A549 (cell line): ENCODE measurements at regions of chr14 and their contacts with region 1.

Region 1: GRCh38 chr14:73503648-73504047 is 12.9 kb downstream of the RIOX1 start:
- DNase-seq: no peak
- ATAC-seq: no peak
- H3K4me3 ChIP-seq: no peak overlapping the region
- H3K27ac ChIP-seq: no peak overlapping the region
- H3K4me1 ChIP-seq: no peaks in the 10 kb centered on the region
- CTCF ChIP-seq: no peak
- EP300 ChIP-seq: no peak
- POLR2A ChIP-seq: no peak
- RAD21 ChIP-seq: no peak

Region 2: DNA sequence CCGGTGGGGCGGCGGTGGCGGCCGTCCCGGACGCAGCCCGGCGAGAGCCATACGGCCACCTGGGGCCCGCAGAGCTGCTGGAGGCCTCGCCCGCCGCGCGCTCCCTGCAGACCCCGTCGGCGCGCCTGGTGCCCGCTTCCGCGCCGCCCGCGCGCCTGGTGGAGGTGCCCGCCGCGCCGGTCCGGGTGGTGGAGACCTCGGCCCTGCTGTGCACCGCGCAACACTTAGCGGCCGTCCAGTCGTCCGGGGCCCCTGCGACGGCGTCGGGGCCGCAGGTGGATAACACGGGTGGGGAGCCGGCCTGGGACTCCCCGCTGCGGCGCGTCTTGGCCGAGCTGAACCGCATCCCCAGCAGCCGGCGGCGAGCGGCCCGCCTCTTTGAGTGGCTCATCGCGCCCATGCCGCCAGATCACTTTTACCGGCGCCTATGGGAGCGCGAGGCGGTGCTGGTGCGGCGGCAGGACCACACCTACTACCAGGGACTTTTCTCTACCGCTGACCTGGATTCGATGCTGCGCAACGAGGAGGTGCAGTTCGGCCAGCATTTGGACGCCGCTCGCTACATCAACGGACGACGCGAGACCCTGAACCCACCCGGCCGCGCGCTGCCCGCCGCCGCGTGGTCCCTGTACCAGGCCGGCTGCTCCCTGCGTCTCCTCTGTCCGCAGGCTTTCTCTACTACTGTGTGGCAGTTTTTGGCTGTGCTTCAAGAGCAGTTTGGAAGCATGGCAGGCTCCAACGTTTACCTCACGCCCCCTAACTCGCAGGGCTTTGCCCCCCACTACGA is 12.2 kb before region 1 on chr14:
- CTCF ChIA-PET with region 1: interaction called, 26 read pairs
- POLR2A ChIA-PET with region 1: interaction called, 7 read pairs
- DNase-seq: peak; percentile 65 to 67
- ATAC-seq: peak; percentile 83 to 87
- H3K4me3 ChIP-seq: peak overlapping the region; percentile 81
- H3K27ac ChIP-seq: peak overlapping the region; percentile 88 to 99
- H3K4me1 ChIP-seq: peaks cover 18% of the 10 kb centered on the region; the same call in 2 of the 3 replicates
- CTCF ChIP-seq: no peak
- EP300 ChIP-seq: no peak
- POLR2A ChIP-seq: peak; percentile 54
- RAD21 ChIP-seq: no peak

Region 3: GRCh38 chr14:73521229-73521628 is 17.6 kb after region 1 on chr14:
- CTCF ChIA-PET with region 1: interaction called, 50 read pairs
- POLR2A ChIA-PET with region 1: no interaction called
- DNase-seq: no peak
- ATAC-seq: peak in 1 of 2 experiments; percentile 51; a peak in 3 of 6 replicates
- H3K4me3 ChIP-seq: no peak overlapping the region
- H3K27ac ChIP-seq: no peak overlapping the region
- H3K4me1 ChIP-seq: peaks cover 1% of the 10 kb centered on the region; the same call in 1 of the 3 replicates
- CTCF ChIP-seq: no peak
- EP300 ChIP-seq: no peak
- POLR2A ChIP-seq: no peak
- RAD21 ChIP-seq: no peak

Region 4: DNA sequence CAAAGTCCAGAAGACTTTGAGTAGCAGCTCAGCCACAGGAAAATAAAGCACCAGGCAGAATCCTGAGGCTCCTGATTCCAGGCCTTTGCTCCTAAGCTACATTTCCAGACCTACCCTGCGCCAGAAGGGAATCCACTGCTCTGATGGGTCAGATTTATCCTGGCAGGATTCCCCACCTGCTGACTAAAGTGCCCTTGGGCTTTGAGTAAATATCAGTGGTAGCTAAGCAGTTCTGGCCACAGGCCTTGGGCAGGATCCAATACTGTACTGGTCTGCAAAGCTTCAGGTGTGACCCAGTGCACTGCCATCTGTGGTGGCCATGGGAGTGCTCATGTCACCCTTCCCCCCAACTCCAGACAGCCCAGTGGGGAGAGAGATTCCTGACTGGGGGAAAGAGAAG is 22.9 kb after region 1 on chr14:
- CTCF ChIA-PET with region 1: interaction called, 50 read pairs
- POLR2A ChIA-PET with region 1: no interaction called
- DNase-seq: no peak
- ATAC-seq: peak; percentile 47 to 49; a peak in 5 of 6 replicates
- H3K4me3 ChIP-seq: no peak overlapping the region
- H3K27ac ChIP-seq: 0 out of 6 replicates have a peak overlapping the region, but pooled peaks of 1 of the 2 experiments have one; percentile 14
- H3K4me1 ChIP-seq: peaks cover 9% of the 10 kb centered on the region; the same call in 1 of the 3 replicates
- CTCF ChIP-seq: no peak
- EP300 ChIP-seq: no peak
- POLR2A ChIP-seq: no peak
- RAD21 ChIP-seq: no peak

Region 5: DNA sequence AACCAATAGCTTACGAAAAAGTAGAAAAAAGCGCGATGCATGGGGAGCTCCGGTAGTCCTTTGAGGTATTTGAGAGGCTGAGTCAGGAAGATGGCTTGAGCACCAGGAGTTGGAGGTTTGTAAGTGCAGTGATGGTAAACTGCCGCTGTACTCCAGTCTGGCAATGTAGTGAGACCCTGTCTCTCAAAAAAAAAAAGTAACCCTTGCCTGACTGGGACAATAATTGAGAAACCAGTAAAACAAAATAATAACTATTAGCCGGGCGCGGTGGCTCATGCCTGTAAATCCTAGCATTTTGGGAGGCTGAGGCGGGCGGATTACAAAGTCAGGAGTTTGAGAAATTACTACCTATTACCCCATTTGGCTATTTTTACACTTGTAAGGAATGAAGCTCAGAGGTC is 64.7 kb after region 1 on chr14:
- CTCF ChIA-PET with region 1: interaction called, 22 read pairs
- POLR2A ChIA-PET with region 1: interaction called, 7 read pairs
- DNase-seq: no peak
- ATAC-seq: no peak
- H3K4me3 ChIP-seq: peak overlapping the region; percentile 55
- H3K27ac ChIP-seq: peak overlapping the region; percentile 94 to 98
- H3K4me1 ChIP-seq: peaks cover 21% of the 10 kb centered on the region
- CTCF ChIP-seq: no peak
- EP300 ChIP-seq: no peak
- POLR2A ChIP-seq: no peak
- RAD21 ChIP-seq: no peak